ENCODE measurements at regions of chr16 and their contacts with region 1.

Region 1: GRCh38 chr16:65375651-65376050 is 253.8 kb upstream of the CDH11 start:
- DNase-seq: peak; percentile 83
- ATAC-seq: peak; percentile 91
- H3K4me3 ChIP-seq: peak overlapping the region; percentile 21; the same call in 1 of the 2 replicates
- H3K27ac ChIP-seq: peak overlapping the region; percentile 91
- H3K4me1 ChIP-seq: peaks cover 51% of the 10 kb centered on the region
- H3K27me3 ChIP-seq: no peaks in the 10 kb centered on the region
- CTCF ChIP-seq: no peak

Region 2: GRCh38 chr16:65123396-65124211 is 252.0 kb before region 1 on chr16:
- CTCF ChIA-PET with region 1: no interaction called
- POLR2A ChIA-PET with region 1: no interaction called
- intact Hi-C with region 1: loop called (anchors 2 kb)
- DNase-seq: no peak
- ATAC-seq: peak; percentile 8
- H3K4me3 ChIP-seq: peak overlapping the region; percentile 90
- H3K27ac ChIP-seq: peak overlapping the region; percentile 64
- H3K4me1 ChIP-seq: peaks cover 13% of the 10 kb centered on the region; the same call in 1 of the 2 replicates
- H3K27me3 ChIP-seq: no peaks in the 10 kb centered on the region
- CTCF ChIP-seq: no peak

Region 3: DNA sequence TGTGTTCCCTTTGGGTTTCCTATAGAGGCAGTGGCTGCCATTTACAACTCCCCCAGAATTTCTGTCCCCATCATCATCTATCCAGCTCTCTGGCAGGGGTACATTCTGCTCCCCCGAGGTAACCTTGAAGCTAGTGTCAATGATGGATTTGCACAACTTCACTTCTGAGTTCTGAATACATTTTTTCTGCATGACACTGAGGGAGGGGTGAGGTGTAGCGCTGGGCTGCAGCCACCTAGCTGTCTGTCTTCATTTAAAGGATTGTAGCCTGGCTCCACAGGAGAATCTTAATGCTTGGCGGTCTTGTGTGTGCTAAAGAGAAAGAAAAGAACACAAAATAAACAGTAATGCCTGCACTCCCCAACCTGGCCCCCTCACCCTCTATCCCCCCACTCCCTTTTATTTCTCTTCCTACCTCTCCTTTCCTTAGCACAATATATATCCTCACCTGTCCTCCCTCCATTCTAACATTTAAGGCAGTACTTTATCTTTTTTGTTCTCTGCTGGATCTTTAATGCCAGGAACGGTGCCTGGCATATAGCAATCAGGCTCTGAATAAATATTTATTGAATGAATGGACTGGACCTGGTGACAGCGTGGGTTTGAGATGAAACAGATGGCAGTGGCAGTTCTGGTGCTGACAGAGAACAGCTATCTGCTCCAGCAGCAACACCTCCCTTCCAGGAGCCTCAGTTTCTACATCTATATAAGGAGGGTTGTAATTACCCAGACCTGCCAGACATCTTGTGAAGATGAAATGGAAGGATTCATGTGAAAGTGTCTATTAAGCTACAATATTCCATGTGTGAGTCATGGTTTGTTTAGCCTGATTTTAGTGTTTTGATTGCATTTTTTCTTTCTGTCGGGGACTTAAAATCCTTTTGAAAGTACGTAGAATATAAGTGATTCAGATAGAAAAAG is 90.3 kb before region 1 on chr16:
- CTCF ChIA-PET with region 1: no interaction called
- POLR2A ChIA-PET with region 1: no interaction called
- intact Hi-C with region 1: loop called (anchors 2 kb)
- DNase-seq: peak; percentile 45
- ATAC-seq: peak; percentile 64
- H3K4me3 ChIP-seq: peak overlapping the region; percentile 35; the same call in 1 of the 2 replicates
- H3K27ac ChIP-seq: no peak overlapping the region
- H3K4me1 ChIP-seq: peaks cover 23% of the 10 kb centered on the region
- H3K27me3 ChIP-seq: no peaks in the 10 kb centered on the region
- CTCF ChIP-seq: no peak

Region 4: GRCh38 chr16:65295527-65295926 is 80.1 kb before region 1 on chr16:
- CTCF ChIA-PET with region 1: no interaction called
- POLR2A ChIA-PET with region 1: no interaction called
- intact Hi-C with region 1: no loop called
- DNase-seq: no peak
- ATAC-seq: no peak
- H3K4me3 ChIP-seq: no peak overlapping the region
- H3K27ac ChIP-seq: no peak overlapping the region
- H3K4me1 ChIP-seq: no peaks in the 10 kb centered on the region
- H3K27me3 ChIP-seq: no peaks in the 10 kb centered on the region
- CTCF ChIP-seq: no peak

Region 5: DNA sequence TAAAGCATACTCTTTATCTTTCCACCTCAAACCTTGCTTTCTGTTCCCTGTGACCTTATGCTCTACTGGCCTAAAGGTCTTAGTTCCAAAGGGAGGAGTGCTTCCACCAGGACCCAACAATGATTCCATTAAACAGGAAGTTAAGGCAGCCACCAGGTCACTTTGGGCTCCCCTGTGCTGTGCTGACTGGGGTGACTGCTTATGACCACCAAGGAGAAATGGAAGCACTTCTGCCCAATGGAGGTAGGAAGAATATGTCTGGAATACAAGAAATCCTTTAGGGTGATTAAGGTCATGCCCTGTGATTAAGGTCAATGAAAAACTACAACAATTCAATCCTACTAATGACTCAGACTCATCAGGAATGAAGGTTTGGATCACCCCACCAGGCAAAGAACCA is 19.9 kb before region 1 on chr16:
- CTCF ChIA-PET with region 1: no interaction called
- POLR2A ChIA-PET with region 1: no interaction called
- intact Hi-C with region 1: no loop called
- DNase-seq: no peak
- ATAC-seq: no peak
- H3K4me3 ChIP-seq: no peak overlapping the region
- H3K27ac ChIP-seq: no peak overlapping the region
- H3K4me1 ChIP-seq: no peaks in the 10 kb centered on the region
- H3K27me3 ChIP-seq: no peaks in the 10 kb centered on the region
- CTCF ChIP-seq: no peak

Region 6: DNA sequence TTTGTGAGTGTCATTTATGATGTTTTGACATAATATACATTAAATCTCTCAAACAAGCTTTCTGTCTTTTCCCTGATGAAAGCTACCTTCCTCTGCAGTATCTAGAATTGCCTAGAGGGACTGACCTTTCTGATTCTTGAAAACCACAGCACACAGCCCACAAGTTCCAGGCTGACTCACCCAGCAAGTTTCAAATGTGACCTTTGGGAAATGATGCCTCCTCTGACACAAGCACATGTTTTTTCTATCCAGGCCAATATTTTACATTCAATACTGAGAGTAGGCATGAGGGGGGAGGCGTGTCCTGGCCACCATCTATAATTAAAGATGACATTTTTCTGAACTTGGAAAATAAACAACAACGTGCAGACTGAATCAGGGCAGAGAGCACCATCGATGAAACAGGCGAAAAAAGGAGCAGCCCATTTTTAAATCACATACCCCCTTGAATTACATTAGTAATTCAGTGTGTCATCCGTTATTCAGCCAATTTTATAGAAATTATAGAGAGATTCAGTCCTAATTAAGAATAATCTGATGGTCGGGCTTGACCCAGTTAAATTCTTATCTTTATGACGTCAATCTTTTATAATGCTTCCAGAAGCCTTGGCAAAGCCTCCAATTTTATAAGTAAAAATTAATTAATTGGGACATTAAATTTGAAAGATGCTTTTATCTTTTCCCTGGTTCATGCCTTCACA is 38.8 kb after region 1 on chr16:
- CTCF ChIA-PET with region 1: no interaction called
- POLR2A ChIA-PET with region 1: no interaction called
- intact Hi-C with region 1: loop called (anchors 5 kb)
- DNase-seq: peak; percentile 90
- ATAC-seq: peak; percentile 62
- H3K4me3 ChIP-seq: no peak overlapping the region; the same call in 1 of the 2 replicates
- H3K27ac ChIP-seq: peak overlapping the region; percentile 93
- H3K4me1 ChIP-seq: peaks cover 57% of the 10 kb centered on the region
- H3K27me3 ChIP-seq: no peaks in the 10 kb centered on the region
- CTCF ChIP-seq: no peak

Region 7: DNA sequence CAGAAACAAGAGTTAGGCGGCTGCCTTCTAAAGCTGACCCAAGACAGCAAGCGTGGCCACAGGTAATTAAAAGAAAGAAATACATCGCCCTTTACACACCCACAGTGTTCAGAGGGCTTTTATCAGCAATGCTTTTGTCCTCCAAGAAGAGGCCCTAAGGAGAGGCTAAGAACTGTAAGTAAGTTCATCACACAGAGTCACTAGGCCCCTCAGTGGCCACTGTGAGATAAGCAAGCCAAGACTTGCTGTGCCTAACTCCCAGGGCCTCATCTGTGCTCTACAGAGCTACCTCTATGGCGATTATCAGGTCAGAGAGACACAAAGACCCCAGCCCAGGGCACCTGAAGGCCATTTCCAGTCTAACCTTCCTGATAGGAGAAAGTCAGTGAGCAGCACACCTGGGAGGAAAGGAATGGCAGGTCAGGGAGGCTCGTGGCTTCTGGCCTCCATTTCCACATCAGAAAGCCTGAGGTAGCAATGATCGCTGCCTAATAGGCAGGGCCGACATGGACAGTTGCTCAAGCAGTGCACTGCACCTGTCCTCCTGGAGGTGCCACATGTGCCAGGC is 291.4 kb after region 1 on chr16:
- CTCF ChIA-PET with region 1: no interaction called
- POLR2A ChIA-PET with region 1: no interaction called
- intact Hi-C with region 1: loop called (anchors 2 kb)
- DNase-seq: peak; percentile 24
- ATAC-seq: peak; percentile 35
- H3K4me3 ChIP-seq: no peak overlapping the region
- H3K27ac ChIP-seq: 0 out of 2 replicates have a peak overlapping the region, but pooled peaks have one; percentile 33
- H3K4me1 ChIP-seq: peaks cover 43% of the 10 kb centered on the region
- H3K27me3 ChIP-seq: no peaks in the 10 kb centered on the region
- CTCF ChIP-seq: peak; percentile 36; the same call in 1 of the 2 replicates

Region 8: GRCh38 chr16:66026211-66026610 is 650.6 kb after region 1 on chr16:
- CTCF ChIA-PET with region 1: no interaction called
- POLR2A ChIA-PET with region 1: no interaction called
- intact Hi-C with region 1: loop called (anchors 10 kb)
- DNase-seq: peak; percentile 50
- ATAC-seq: peak; percentile 98
- H3K4me3 ChIP-seq: no peak overlapping the region
- H3K27ac ChIP-seq: no peak overlapping the region
- H3K4me1 ChIP-seq: 0 out of 2 replicates have a peak, but pooled peaks cover 8% of the 10 kb centered on the region
- H3K27me3 ChIP-seq: no peaks in the 10 kb centered on the region
- CTCF ChIP-seq: peak; percentile 58

Measured in PC-3 (cell line).